ENCODE measurements at regions of chr19 and their contacts with region 1.

Region 1: GRCh38 chr19:47514869-47515588 is at the start of gene NAPA:
- DNase-seq: peak; percentile 100
- ATAC-seq: peak; percentile 97 to 99 (median 98)
- H3K4me3 ChIP-seq: peak within 1 kb of the TSS; percentile 81 to 99 (median 94)
- H3K27ac ChIP-seq: peak within 1 kb of the TSS; percentile 49 to 99 (median 96)
- H3K4me1 ChIP-seq: peaks cover 31 to 53% (median 49%) of the 10 kb centered on the region in 9 donors
- H3K27me3 ChIP-seq: no peaks in the 10 kb centered on the region
- CTCF ChIP-seq: no peak
- total RNA-seq, gene NAPA: 115 to 183 (median 121) TPM

Region 2: GRCh38 chr19:47330466-47330869 is 184.6 kb before region 1 on chr19:
- intact Hi-C with region 1: no loop called
- DNase-seq: no peak
- ATAC-seq: peak in 7 of 8 donors; percentile 59 to 85 (median 74)
- H3K4me3 ChIP-seq: peak overlapping the region in 7 of 10 donors; percentile 7 to 40 (median 22)
- H3K27ac ChIP-seq: peak overlapping the region in 8 of 10 donors; percentile 36 to 91 (median 72)
- H3K4me1 ChIP-seq: peaks cover 0 to 43% (median 0%) of the 10 kb centered on the region in 9 donors
- H3K27me3 ChIP-seq: peaks cover 0 to 27% (median 0%) of the 10 kb centered on the region in 7 donors
- CTCF ChIP-seq: no peak

Region 3: GRCh38 chr19:47428177-47428894 is 86.7 kb before region 1 on chr19:
- intact Hi-C with region 1: loop called in 1 of 10 experiments (anchors 5 kb)
- DNase-seq: peak; percentile 80 to 90
- ATAC-seq: peak; percentile 78 to 94 (median 87)
- H3K4me3 ChIP-seq: peak overlapping the region in 2 of 10 donors; percentile 10 to 15
- H3K27ac ChIP-seq: no peak overlapping the region
- H3K4me1 ChIP-seq: peaks cover 7 to 27% (median 21%) of the 10 kb centered on the region in 9 donors
- H3K27me3 ChIP-seq: peaks cover 9 to 93% (median 75%) of the 10 kb centered on the region in 7 donors
- CTCF ChIP-seq: no peak

Region 4: DNA sequence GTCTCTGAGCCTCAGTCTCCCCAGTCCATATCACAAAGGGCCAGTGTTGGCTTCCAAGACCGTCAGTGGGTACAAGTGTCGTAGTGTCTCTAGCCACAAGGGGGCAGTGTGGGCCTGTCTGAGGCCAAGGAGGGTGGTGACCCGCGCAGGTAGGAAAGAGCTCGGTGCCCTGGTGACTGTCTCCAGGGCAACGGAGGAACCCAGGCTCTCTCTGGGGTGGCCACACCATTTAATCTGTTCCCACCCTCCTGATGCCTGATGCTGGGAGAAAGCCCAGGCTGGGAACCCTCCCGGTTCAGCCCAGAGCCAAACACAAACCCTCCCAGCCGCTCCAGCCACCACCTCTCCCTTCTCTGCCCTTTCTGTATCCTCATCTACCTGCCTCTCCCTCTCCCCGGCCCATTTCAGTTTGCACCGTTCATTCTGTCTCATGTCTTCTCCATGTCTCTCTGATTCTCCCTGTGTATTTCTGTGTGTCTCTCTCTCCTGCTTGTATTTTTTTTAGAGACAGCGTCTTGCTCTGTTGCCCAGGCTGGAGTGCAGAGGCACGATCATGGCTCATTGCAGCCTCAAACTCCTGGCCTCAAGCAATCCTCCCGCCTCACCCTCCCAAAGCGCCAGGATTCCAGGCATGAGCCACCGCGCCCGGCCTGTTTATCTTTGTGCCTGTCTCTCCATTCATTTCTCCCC is 78.2 kb before region 1 on chr19:
- intact Hi-C with region 1: loop called in 8 of 10 experiments (anchors 1 to 5 kb)
- DNase-seq: peak; percentile 74 to 75
- ATAC-seq: peak; percentile 88 to 94 (median 92)
- H3K4me3 ChIP-seq: no peak overlapping the region
- H3K27ac ChIP-seq: no peak overlapping the region
- H3K4me1 ChIP-seq: peaks cover 0 to 7% (median 0%) of the 10 kb centered on the region in 9 donors
- H3K27me3 ChIP-seq: peaks cover 0 to 86% (median 64%) of the 10 kb centered on the region in 7 donors
- CTCF ChIP-seq: peak; percentile 83 to 93 (median 89)

Region 5: GRCh38 chr19:47483800-47484690 is 31.0 kb before region 1 on chr19 and contains the start of gene KPTN:
- intact Hi-C with region 1: loop called in 2 of 10 experiments (anchors 1 to 5 kb)
- DNase-seq: peak; percentile 88
- ATAC-seq: peak; percentile 90 to 95 (median 94)
- H3K4me3 ChIP-seq: peak within 1 kb of the TSS; percentile 56 to 78 (median 72)
- H3K27ac ChIP-seq: peak within 1 kb of the TSS; percentile 84 to 98 (median 92)
- H3K4me1 ChIP-seq: peaks cover 0 to 18% (median 9%) of the 10 kb centered on the region in 9 donors
- H3K27me3 ChIP-seq: no peaks in the 10 kb centered on the region
- CTCF ChIP-seq: peak; percentile 62 to 88 (median 85)
- total RNA-seq, gene KPTN: 4.0 to 11.8 (median 8.1) TPM

Region 6: DNA sequence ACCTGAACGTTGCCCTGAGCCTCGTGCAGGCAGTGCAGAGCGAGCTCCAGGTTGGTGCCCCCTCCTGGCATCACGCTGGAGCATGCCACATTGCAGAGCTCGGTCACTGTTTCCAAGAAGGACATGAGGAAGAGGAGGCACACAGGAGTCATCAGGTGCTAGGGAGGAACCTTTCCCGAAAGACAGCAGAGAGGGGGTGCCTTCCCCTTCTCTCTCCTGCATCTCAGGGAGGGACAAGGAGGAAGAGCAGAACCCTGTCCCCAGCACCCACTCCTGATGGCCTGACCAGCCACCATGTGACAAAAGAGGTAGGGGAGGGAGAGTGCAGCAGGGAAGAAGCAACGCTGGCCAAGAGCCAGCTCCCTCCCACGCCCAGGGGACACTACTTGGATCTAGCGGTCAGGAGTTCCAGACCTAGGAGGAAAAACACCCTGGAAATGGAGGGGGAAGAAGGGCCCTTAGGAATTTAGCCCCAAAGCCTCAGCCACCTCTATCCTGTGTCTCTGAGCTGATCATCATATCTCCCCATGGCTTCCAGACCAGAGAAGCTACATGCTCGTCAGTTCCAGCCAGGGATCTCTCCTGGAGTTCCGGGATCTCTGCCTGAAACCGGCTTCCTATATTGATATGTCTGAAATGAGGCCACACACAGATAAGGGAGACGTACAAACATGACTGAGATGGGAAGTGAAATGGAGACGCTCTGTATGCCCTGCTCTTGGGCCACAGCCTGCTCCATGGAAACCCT is 16.8 kb after region 1 on chr19:
- intact Hi-C with region 1: no loop called
- DNase-seq: no peak
- ATAC-seq: peak in 3 of 8 donors; percentile 14 to 50 (median 25)
- H3K4me3 ChIP-seq: no peak overlapping the region
- H3K27ac ChIP-seq: no peak overlapping the region
- H3K4me1 ChIP-seq: peaks cover 0 to 6% (median 0%) of the 10 kb centered on the region in 9 donors
- H3K27me3 ChIP-seq: no peaks in the 10 kb centered on the region
- CTCF ChIP-seq: no peak

Region 7: GRCh38 chr19:47600246-47601179 is 85.5 kb after region 1 on chr19:
- intact Hi-C with region 1: loop called in 9 of 10 experiments (anchors 1 to 10 kb)
- DNase-seq: peak; percentile 99 to 100
- ATAC-seq: peak; percentile 98 to 100 (median 98)
- H3K4me3 ChIP-seq: peak overlapping the region; percentile 16 to 73 (median 64)
- H3K27ac ChIP-seq: peak overlapping the region; percentile 44 to 92 (median 86)
- H3K4me1 ChIP-seq: peaks cover 2 to 46% (median 22%) of the 10 kb centered on the region in 9 donors
- H3K27me3 ChIP-seq: no peaks in the 10 kb centered on the region
- CTCF ChIP-seq: peak in 1 of 9 donors; percentile 13

Region 8: DNA sequence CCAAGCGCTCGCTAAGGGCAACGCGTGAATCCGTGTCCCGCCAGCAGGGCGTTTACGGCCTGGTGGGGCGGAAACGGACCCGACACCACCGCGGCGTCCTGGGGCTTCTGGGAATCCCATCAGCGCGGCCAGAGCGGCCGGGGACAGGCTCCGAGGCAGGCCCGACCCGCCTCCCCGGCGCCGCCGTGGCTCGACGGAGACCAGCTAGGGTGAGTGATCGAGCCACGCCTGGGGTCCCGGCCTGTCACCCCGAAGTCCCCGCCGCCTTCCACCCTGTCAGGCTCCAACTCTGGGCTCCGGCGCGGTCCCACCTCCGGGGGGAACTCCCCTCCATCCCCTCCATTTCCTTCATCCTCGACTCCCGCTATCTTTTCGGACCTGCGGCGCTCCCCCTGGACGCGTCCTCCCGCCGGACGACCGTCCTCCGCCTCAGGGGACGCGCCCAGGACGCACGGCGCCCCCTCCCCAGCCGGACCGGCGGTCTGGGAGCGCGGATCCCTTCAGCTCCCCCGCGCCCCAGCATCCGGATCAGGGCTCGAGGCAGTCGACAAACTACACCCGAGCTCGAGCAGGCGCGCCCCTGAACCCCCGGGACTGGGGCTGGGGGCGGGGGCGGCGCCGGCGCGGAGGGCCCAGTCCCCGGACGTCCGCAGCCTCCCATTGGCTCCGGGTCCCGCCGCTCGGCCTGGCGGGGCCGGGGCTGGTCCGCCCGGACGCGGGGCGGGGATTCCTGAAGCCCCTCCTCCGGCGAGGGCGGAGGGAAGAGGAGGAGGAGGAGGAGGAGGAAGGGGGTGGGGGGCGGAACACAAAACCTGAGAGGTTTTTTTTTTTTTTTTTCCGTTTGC is 93.3 kb after region 1 on chr19:
- intact Hi-C with region 1: loop called in 7 of 10 experiments (anchors 2 to 10 kb)
- DNase-seq: peak; percentile 95 to 97
- ATAC-seq: peak; percentile 94 to 96 (median 96)
- H3K4me3 ChIP-seq: peak overlapping the region; percentile 80 to 100 (median 96)
- H3K27ac ChIP-seq: peak overlapping the region; percentile 92 to 100 (median 98)
- H3K4me1 ChIP-seq: peaks cover 18 to 44% (median 39%) of the 10 kb centered on the region in 9 donors
- H3K27me3 ChIP-seq: no peaks in the 10 kb centered on the region
- CTCF ChIP-seq: peak in 5 of 9 donors; percentile 14 to 46 (median 42)

Region 9: GRCh38 chr19:47697863-47698609 is 183.0 kb after region 1 on chr19:
- intact Hi-C with region 1: loop called (anchors 5 to 10 kb)
- DNase-seq: peak; percentile 73 to 75
- ATAC-seq: peak; percentile 79 to 90 (median 84)
- H3K4me3 ChIP-seq: no peak overlapping the region
- H3K27ac ChIP-seq: peak overlapping the region in 7 of 10 donors; percentile 25 to 73 (median 66)
- H3K4me1 ChIP-seq: peaks cover 0 to 10% (median 6%) of the 10 kb centered on the region in 9 donors
- H3K27me3 ChIP-seq: no peaks in the 10 kb centered on the region
- CTCF ChIP-seq: peak; percentile 91 to 99 (median 96)

Region 10: DNA sequence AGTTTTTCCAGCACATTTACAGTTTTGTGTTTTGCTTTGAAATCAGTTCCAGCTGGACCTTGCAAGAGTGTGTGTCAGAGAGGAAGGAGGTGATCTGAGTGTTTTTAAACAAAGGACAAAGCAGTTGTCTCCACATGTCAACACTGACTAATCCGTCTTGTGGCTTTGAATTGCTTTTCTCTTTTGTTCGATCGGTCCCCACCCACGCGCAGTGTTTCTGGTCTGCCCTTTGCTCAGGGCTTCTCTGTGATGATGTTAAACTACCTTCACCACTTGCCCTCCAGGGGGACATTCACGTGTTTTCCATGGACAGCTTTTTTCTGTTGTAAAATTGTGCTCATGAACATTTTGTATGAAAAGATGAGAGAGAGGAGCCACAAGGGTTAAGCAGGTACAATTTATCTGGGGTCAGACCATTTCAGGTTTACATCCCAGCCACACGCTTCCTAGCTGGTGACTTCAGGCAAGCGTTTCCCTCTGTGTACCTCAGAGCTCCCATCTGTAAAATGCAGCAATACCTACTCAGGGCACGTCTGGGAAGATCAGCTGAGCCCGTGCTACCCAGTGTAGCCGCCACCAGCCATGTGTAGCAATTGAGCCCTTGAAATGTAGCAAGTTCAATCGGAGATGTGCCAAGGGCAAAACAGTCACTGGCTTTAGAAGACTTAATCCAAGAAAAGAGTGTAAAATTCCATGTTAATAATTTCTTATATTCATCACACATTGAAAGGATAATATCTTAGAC is 609.0 kb after region 1 on chr19:
- intact Hi-C with region 1: no loop called
- DNase-seq: no peak
- ATAC-seq: peak in 4 of 8 donors; percentile 37 to 79 (median 68)
- H3K4me3 ChIP-seq: no peak overlapping the region
- H3K27ac ChIP-seq: peak overlapping the region in 1 of 10 donors; percentile 26
- H3K4me1 ChIP-seq: peaks cover 0 to 21% (median 9%) of the 10 kb centered on the region in 9 donors
- H3K27me3 ChIP-seq: no peaks in the 10 kb centered on the region
- CTCF ChIP-seq: peak in 1 of 9 donors; percentile 14

Region 11: DNA sequence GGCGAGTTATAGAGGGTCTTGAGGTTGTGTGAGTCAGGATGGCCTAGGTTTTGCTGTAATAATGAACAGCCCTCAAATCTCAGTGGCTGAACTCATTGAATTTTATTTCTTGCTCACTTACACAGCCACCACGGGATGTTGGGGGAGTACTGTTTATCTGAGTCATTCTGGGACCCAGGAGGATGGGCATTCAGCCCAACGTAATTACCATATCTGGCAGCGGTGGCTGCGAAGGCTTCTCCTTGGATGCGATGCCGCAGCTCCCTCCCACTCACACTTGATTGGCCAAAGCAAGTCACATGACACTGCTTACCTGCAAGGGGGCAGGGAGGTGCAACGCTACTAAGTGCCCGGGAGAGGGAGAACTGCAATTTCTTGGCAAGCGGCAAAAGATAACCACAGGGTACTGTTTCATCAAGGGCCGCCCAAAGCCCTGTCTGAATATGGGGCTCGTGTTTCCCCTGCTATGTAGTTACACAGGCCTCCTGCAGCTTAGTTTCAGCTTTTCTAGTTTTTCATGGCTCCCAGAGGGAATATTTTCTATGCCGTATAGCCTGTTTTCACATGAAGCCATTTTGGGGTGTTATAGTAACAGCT is 675.4 kb after region 1 on chr19:
- intact Hi-C with region 1: no loop called
- DNase-seq: no peak
- ATAC-seq: no peak
- H3K4me3 ChIP-seq: no peak overlapping the region
- H3K27ac ChIP-seq: no peak overlapping the region
- H3K4me1 ChIP-seq: no peaks in the 10 kb centered on the region
- H3K27me3 ChIP-seq: no peaks in the 10 kb centered on the region
- CTCF ChIP-seq: peak in 1 of 9 donors; percentile 11